Naive thymus-derived CD4-positive, alpha-beta T cell (primary cell): ENCODE measurements at regions of chr3 and their contacts with region 1.

Region 1: GRCh38 chr3:138329127-138329983 is at the start of gene NME9:
- DNase-seq: peak; percentile 79 to 91 (median 86)
- ATAC-seq: peak; percentile 95
- H3K4me3 ChIP-seq: peak within 1 kb of the TSS; percentile 78
- H3K4me3 Mint-ChIP-seq: peak within 1 kb of the TSS; percentile 91 to 99 (median 97)
- H3K27ac ChIP-seq: peak within 1 kb of the TSS; percentile 86
- H3K27ac Mint-ChIP-seq: peak within 1 kb of the TSS; percentile 85 to 98 (median 94)
- H3K4me1 ChIP-seq: peaks cover 5 to 8% of the 10 kb centered on the region in 2 donors
- H3K4me1 Mint-ChIP-seq: peaks cover 12 to 40% (median 36%) of the 10 kb centered on the region in 7 donors
- H3K27me3 ChIP-seq: no peaks in the 10 kb centered on the region
- H3K27me3 Mint-ChIP-seq: peaks cover 0 to 10% (median 0%) of the 10 kb centered on the region in 5 donors
- total RNA-seq, gene NME9: 0.69 to 2.0 (median 1.2) TPM in 4 of 5 experiments, not detected in the other

Region 2: GRCh38 chr3:138180375-138181029 is 148.9 kb before region 1 on chr3:
- CTCF ChIA-PET with region 1: interaction called, 3 read pairs
- POLR2A ChIA-PET with region 1: interaction called, 3 read pairs
- intact Hi-C with region 1: loop called in 1 of 2 experiments (anchors 1 kb)
- DNase-seq: peak in 7 of 9 donors; percentile 16 to 53 (median 38)
- ATAC-seq: peak; percentile 95
- H3K4me3 ChIP-seq: no peak overlapping the region
- H3K4me3 Mint-ChIP-seq: no peak overlapping the region
- H3K27ac ChIP-seq: no peak overlapping the region
- H3K27ac Mint-ChIP-seq: no peak overlapping the region
- H3K4me1 ChIP-seq: no peaks in the 10 kb centered on the region
- H3K4me1 Mint-ChIP-seq: peaks cover 0 to 13% (median 5%) of the 10 kb centered on the region in 7 donors
- H3K27me3 ChIP-seq: no peaks in the 10 kb centered on the region
- H3K27me3 Mint-ChIP-seq: peaks cover 0 to 32% (median 9%) of the 10 kb centered on the region in 5 donors

Region 3: GRCh38 chr3:138284957-138285477 is 44.3 kb before region 1 on chr3:
- CTCF ChIA-PET with region 1: interaction called, 3 read pairs
- POLR2A ChIA-PET with region 1: no interaction called
- intact Hi-C with region 1: loop called in 1 of 2 experiments (anchors 5 kb)
- DNase-seq: no peak
- ATAC-seq: no peak
- H3K4me3 ChIP-seq: no peak overlapping the region
- H3K4me3 Mint-ChIP-seq: no peak overlapping the region
- H3K27ac ChIP-seq: no peak overlapping the region
- H3K27ac Mint-ChIP-seq: no peak overlapping the region
- H3K4me1 ChIP-seq: no peaks in the 10 kb centered on the region
- H3K4me1 Mint-ChIP-seq: peaks cover 0 to 5% (median 0%) of the 10 kb centered on the region in 7 donors
- H3K27me3 ChIP-seq: no peaks in the 10 kb centered on the region
- H3K27me3 Mint-ChIP-seq: no peaks in the 10 kb centered on the region

Region 4: DNA sequence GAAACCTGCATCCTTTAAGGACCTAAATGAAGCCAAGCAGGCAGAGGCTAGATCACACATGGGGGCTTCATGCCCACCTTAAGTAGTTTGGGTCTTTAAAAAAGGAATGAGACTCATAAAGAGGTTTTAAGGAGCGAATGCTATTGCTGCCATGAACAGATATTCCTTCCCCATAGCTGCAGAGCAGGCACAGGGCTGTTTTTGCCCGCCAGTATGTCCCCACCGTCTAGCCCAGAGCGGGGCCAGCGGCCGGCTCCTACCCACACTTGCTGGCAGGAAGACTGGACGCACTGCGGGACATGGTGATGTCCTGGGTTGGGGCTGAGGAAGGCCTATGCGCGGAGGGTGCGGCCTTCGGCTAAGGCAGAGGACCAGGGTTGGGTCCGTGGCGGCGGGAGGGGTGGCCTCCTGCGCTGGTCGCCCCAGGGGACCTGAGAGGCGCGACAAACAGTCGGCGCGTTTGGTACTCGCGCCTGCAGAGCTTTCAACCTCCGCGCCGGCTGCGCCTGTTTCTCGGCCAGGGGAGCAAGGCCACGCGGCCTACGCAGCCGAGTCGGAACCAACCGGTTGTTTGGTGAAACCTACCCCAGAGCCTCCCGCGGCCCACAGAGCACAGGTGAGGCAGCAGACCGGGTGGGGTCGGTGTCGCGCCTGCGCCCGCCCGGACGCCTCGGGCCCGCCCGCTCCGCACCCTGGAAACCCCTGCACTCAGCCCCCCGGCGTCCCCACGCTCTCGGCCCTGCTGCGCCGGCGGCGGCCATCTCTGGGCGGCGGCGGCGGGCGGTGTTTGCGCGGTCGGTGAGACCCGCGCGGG is 279.2 kb after region 1 on chr3 and contains the start of gene FAIM:
- CTCF ChIA-PET with region 1: no interaction called
- POLR2A ChIA-PET with region 1: no interaction called
- intact Hi-C with region 1: loop called in 1 of 2 experiments (anchors 2 kb)
- DNase-seq: peak; percentile 54 to 82 (median 77)
- ATAC-seq: peak; percentile 84
- H3K4me3 ChIP-seq: peak within 1 kb of the TSS; percentile 81
- H3K4me3 Mint-ChIP-seq: peak within 1 kb of the TSS; percentile 84 to 96 (median 91)
- H3K27ac ChIP-seq: peak within 1 kb of the TSS; percentile 90
- H3K27ac Mint-ChIP-seq: peak within 1 kb of the TSS; percentile 84 to 100 (median 98)
- H3K4me1 ChIP-seq: peaks cover 14 to 15% of the 10 kb centered on the region in 2 donors
- H3K4me1 Mint-ChIP-seq: peaks cover 6 to 21% (median 18%) of the 10 kb centered on the region in 7 donors
- H3K27me3 ChIP-seq: no peaks in the 10 kb centered on the region
- H3K27me3 Mint-ChIP-seq: peaks cover 0 to 3% (median 0%) of the 10 kb centered on the region in 5 donors
- total RNA-seq, gene FAIM: 1.6 to 3.3 (median 2.6) TPM

Region 5: GRCh38 chr3:139343895-139344856 is 1014.8 kb after region 1 on chr3 and contains the start of gene MRPS22:
- CTCF ChIA-PET with region 1: no interaction called
- POLR2A ChIA-PET with region 1: no interaction called
- intact Hi-C with region 1: loop called in 1 of 2 experiments (anchors 5 kb)
- DNase-seq: peak; percentile 52 to 87 (median 85)
- ATAC-seq: peak; percentile 97
- H3K4me3 ChIP-seq: peak within 1 kb of the TSS; percentile 86
- H3K4me3 Mint-ChIP-seq: peak within 1 kb of the TSS in 2 of 10 donors; percentile 59 to 72
- H3K27ac ChIP-seq: peak within 1 kb of the TSS; percentile 88
- H3K27ac Mint-ChIP-seq: peak within 1 kb of the TSS in 3 of 9 donors; percentile 15 to 64 (median 31)
- H3K4me1 ChIP-seq: peaks cover 15% of the 10 kb centered on the region in 2 donors
- H3K4me1 Mint-ChIP-seq: peaks cover 7 to 19% (median 10%) of the 10 kb centered on the region in 7 donors
- H3K27me3 ChIP-seq: no peaks in the 10 kb centered on the region
- H3K27me3 Mint-ChIP-seq: peaks cover 0 to 9% (median 6%) of the 10 kb centered on the region in 5 donors
- total RNA-seq, gene MRPS22: 26.2 to 37.2 (median 36.3) TPM